IMR-90 (cell line): ENCODE measurements at regions of chrX and their contacts with region 1.

Region 1: GRCh38 chrX:41180194-41180908 is 95.1 kb downstream of the USP9X start:
- DNase-seq: peak; percentile 77
- ATAC-seq: peak; percentile 94
- H3K4me3 ChIP-seq: no peak overlapping the region
- H3K27ac ChIP-seq: no peak overlapping the region
- H3K4me1 ChIP-seq: no peaks in the 10 kb centered on the region
- H3K27me3 ChIP-seq: no peaks in the 10 kb centered on the region
- CTCF ChIP-seq: peak; percentile 73
- POLR2A ChIP-seq: no peak
- RAD21 ChIP-seq: peak; percentile 50

Region 2: GRCh38 chrX:40778861-40779575 is 401.3 kb before region 1 on chrX:
- CTCF ChIA-PET with region 1: no interaction called
- POLR2A ChIA-PET with region 1: interaction called, 11 read pairs
- dilution Hi-C with region 1: no loop called
- in situ Hi-C with region 1: no loop called
- intact Hi-C with region 1: no loop called
- DNase-seq: peak; percentile 72
- ATAC-seq: no peak; the same call in 1 of the 2 replicates
- H3K4me3 ChIP-seq: no peak overlapping the region
- H3K27ac ChIP-seq: no peak overlapping the region
- H3K4me1 ChIP-seq: no peaks in the 10 kb centered on the region
- H3K27me3 ChIP-seq: no peaks in the 10 kb centered on the region; the same call in 1 of the 2 replicates
- CTCF ChIP-seq: no peak
- POLR2A ChIP-seq: no peak
- RAD21 ChIP-seq: no peak

Region 3: GRCh38 chrX:41145920-41146608 is 34.3 kb before region 1 on chrX:
- CTCF ChIA-PET with region 1: no interaction called
- POLR2A ChIA-PET with region 1: no interaction called
- dilution Hi-C with region 1: no loop called
- in situ Hi-C with region 1: no loop called
- intact Hi-C with region 1: no loop called
- DNase-seq: peak; percentile 92
- ATAC-seq: peak; percentile 59
- H3K4me3 ChIP-seq: no peak overlapping the region
- H3K27ac ChIP-seq: no peak overlapping the region
- H3K4me1 ChIP-seq: peaks cover 3% of the 10 kb centered on the region; the same call in 1 of the 2 replicates
- H3K27me3 ChIP-seq: no peaks in the 10 kb centered on the region
- CTCF ChIP-seq: 0 out of 2 replicates have a peak, but pooled peaks have one; percentile 12
- POLR2A ChIP-seq: no peak
- RAD21 ChIP-seq: no peak

Region 4: GRCh38 chrX:41164449-41164848 is 15.9 kb before region 1 on chrX:
- CTCF ChIA-PET with region 1: interaction called, 13 read pairs
- POLR2A ChIA-PET with region 1: no interaction called
- dilution Hi-C with region 1: no loop called
- in situ Hi-C with region 1: no loop called
- intact Hi-C with region 1: no loop called
- DNase-seq: no peak
- ATAC-seq: no peak
- H3K4me3 ChIP-seq: no peak overlapping the region
- H3K27ac ChIP-seq: no peak overlapping the region
- H3K4me1 ChIP-seq: no peaks in the 10 kb centered on the region
- H3K27me3 ChIP-seq: peaks cover 2% of the 10 kb centered on the region; the same call in 1 of the 2 replicates
- CTCF ChIP-seq: no peak
- POLR2A ChIP-seq: no peak
- RAD21 ChIP-seq: no peak

Region 5: GRCh38 chrX:41258226-41258625 is 77.9 kb after region 1 on chrX:
- CTCF ChIA-PET with region 1: interaction called, 9 read pairs
- POLR2A ChIA-PET with region 1: no interaction called
- dilution Hi-C with region 1: no loop called
- in situ Hi-C with region 1: no loop called
- intact Hi-C with region 1: loop called (anchors 1 kb)
- DNase-seq: no peak
- ATAC-seq: no peak
- H3K4me3 ChIP-seq: no peak overlapping the region
- H3K27ac ChIP-seq: no peak overlapping the region
- H3K4me1 ChIP-seq: no peaks in the 10 kb centered on the region
- H3K27me3 ChIP-seq: peaks cover 5% of the 10 kb centered on the region; the same call in 1 of the 2 replicates
- CTCF ChIP-seq: no peak
- POLR2A ChIP-seq: no peak
- RAD21 ChIP-seq: no peak

Region 6: GRCh38 chrX:41350976-41351569 is 170.7 kb after region 1 on chrX:
- CTCF ChIA-PET with region 1: no interaction called
- POLR2A ChIA-PET with region 1: no interaction called
- dilution Hi-C with region 1: no loop called
- in situ Hi-C with region 1: no loop called
- intact Hi-C with region 1: no loop called
- DNase-seq: peak; percentile 22
- ATAC-seq: no peak
- H3K4me3 ChIP-seq: no peak overlapping the region
- H3K27ac ChIP-seq: no peak overlapping the region
- H3K4me1 ChIP-seq: peaks cover 2% of the 10 kb centered on the region; the same call in 1 of the 2 replicates
- H3K27me3 ChIP-seq: no peaks in the 10 kb centered on the region
- CTCF ChIP-seq: no peak
- POLR2A ChIP-seq: no peak; the same call in none of the 2 replicates
- RAD21 ChIP-seq: no peak